Activated T-helper 1 cell treated with anti-CD3 and anti-CD28 coated beads, Interleukin-12 subunit alpha, Interleukin-12 subunit beta, Interleukin-2, Interleukin-4 antibody, amounts not matched to agents 30 ng/mL and 10 ng/mL and 1 ng/mL, durations not matched to agents 14 hours and 24 hours and 36 hours (primary cell): ENCODE measurements at regions of chr2 and their contacts with region 1.

Region 1: DNA sequence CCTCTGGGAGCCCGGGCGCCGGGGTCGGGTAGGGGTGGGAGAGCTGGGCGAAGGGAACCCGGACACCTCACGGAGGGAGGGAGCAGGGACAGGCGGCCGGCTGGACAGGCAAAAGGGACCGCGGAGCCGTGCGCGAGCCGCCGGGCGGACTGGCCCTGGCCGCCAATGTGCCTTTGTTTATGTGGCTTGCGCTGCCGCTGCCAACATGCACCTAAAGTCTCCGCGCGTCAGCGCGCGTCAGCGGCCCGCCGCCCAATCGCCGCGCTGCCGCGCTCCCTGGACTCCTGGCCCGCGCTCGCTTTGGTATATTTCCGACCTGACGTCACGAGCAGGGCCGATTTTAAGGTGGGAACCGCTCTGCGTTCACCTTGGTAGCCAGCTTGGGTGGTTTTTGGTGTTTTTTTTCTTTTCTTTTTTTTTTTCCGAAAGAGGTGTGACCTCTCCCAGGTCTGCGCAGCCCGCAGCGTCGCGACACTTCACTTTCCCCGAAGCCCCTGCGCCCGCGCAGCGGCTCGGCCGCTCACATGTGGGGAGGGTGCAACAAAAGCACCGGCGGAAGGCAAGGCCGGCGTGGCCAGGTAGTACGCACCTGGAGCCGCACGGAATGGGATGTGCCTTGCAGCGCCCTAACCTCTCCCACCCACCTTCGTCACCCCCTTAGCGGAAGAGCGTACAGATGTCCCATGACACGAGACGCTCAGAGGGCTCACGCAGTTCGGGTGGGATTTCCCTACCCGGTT is at the start of gene NR4A2:
- DNase-seq: peak; percentile 84
- H3K4me3 Mint-ChIP-seq: peak within 1 kb of the TSS; percentile 91
- H3K27ac Mint-ChIP-seq: peak within 1 kb of the TSS; percentile 97
- H3K4me1 Mint-ChIP-seq: peaks cover 74% of the 10 kb centered on the region
- H3K27me3 Mint-ChIP-seq: peaks cover 15% of the 10 kb centered on the region
- total RNA-seq, gene NR4A2: 20.5 and 21.9 TPM in 2 replicates

Region 2: DNA sequence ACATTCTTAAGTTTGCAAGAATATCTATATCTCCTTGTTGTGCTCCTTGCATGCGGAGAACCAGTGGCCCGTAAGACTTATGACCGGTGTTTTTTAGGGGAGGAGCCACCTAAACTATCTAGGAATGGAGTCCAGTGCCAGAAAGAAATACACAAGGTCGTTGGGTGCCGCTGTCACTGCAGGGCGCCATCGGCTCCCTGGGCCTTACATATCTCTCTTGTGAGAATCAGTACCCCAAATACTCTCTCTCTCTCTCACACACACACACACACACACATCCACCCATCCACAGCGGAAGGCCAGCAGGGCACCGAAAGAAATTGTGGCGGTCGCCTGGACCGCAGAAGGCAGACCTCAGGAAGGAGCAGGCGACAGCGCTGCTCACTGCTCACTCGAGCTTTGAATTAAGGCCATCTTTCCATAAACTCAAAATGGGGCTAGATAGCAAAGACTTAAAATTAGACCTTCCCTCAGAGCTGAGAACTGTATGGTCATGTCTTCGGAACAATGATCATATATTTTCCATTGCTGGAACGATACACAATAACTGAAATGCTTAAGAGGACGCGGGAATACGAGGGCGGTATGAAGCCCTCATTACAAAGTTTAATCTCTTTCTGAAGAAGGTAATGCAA is 10.5 kb before region 1 on chr2:
- intact Hi-C with region 1: loop called (anchors 1 kb)
- DNase-seq: no peak
- H3K4me3 Mint-ChIP-seq: peak overlapping the region; percentile 80
- H3K27ac Mint-ChIP-seq: peak overlapping the region; percentile 52
- H3K4me1 Mint-ChIP-seq: peaks cover 29% of the 10 kb centered on the region
- H3K27me3 Mint-ChIP-seq: peaks cover 73% of the 10 kb centered on the region

Region 3: GRCh38 chr2:156435715-156436496 is 103.2 kb after region 1 on chr2 and contains the start of gene GPD2:
- intact Hi-C with region 1: loop called (anchors 1 kb)
- DNase-seq: peak; percentile 56
- H3K4me3 Mint-ChIP-seq: peak within 1 kb of the TSS; percentile 92
- H3K27ac Mint-ChIP-seq: peak within 1 kb of the TSS; percentile 98
- H3K4me1 Mint-ChIP-seq: peaks cover 34% of the 10 kb centered on the region
- H3K27me3 Mint-ChIP-seq: peaks cover 2% of the 10 kb centered on the region
- total RNA-seq, gene GPD2: 15.7 and 18.1 TPM in 2 replicates

Region 4: DNA sequence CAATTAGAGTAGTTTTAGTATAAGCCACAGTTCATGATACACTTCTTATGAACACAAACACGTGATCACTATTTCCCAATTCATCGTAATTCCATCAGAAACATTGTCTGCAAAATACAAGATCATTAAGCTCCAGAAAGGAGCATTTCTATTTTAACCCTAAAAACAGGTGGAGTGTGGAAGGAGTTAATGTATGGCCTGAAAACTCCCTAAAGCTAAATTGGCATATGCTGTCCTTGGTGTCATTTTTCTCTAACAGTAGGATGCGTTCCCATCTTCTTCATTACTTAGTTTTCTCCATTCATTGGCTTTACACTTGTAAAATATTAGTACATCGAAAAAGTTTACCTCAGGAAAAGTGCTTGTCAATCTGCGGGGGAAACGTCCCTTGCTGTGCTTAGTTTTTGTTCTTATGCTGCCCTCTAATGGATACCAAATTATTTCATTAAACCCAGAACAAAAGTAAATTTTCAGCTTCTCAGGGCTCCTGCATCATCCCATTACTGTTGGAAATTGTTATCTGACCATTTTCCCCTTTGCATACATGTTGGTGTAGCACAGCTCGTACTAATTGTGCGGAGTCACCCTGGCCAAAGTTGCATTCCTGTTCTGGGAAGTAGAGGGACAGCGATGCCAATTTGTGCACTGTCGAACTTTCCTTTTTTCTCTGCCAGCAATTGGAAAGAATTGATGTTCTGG is 256.8 kb after region 1 on chr2:
- intact Hi-C with region 1: loop called (anchors 1 kb)
- DNase-seq: no peak
- H3K4me3 Mint-ChIP-seq: no peak overlapping the region
- H3K27ac Mint-ChIP-seq: no peak overlapping the region
- H3K4me1 Mint-ChIP-seq: peaks cover 16% of the 10 kb centered on the region
- H3K27me3 Mint-ChIP-seq: no peaks in the 10 kb centered on the region

Region 5: DNA sequence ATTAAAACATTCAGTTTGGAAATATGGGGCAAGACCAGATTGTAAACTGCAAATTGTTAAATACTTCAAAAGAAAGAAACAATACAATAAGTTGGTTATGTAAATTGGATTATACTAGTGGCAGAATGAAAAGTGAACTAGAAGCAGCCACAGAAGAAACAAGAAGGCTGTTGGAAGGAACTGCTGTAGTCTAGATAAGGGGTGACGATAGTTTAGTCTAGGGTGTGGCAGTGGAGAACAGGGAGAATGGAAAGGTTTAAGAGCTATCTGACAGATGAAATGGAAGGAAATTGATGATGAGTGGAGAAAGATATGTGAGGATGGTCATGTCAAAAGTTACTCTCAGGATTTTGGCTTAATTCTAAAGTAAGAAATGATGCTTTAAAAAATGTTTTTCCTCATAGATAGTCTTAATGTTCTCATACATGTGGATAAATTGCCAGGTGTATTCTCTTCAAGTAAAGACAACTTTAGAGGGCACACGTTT is 283.2 kb after region 1 on chr2:
- intact Hi-C with region 1: no loop called
- DNase-seq: no peak
- H3K4me3 Mint-ChIP-seq: no peak overlapping the region
- H3K27ac Mint-ChIP-seq: no peak overlapping the region
- H3K4me1 Mint-ChIP-seq: no peaks in the 10 kb centered on the region
- H3K27me3 Mint-ChIP-seq: peaks cover 9% of the 10 kb centered on the region

Region 6: GRCh38 chr2:157413326-157414035 is 1080.8 kb after region 1 on chr2:
- intact Hi-C with region 1: loop called (anchors 2 kb)
- DNase-seq: peak; percentile 60
- H3K4me3 Mint-ChIP-seq: peak overlapping the region; percentile 82
- H3K27ac Mint-ChIP-seq: peak overlapping the region; percentile 91
- H3K4me1 Mint-ChIP-seq: peaks cover 84% of the 10 kb centered on the region
- H3K27me3 Mint-ChIP-seq: no peaks in the 10 kb centered on the region